ENCODE measurements at regions of chr20 and their contacts with region 1.

Region 1: GRCh38 chr20:63739130-63740069 is at the start of gene SLC2A4RG:
- DNase-seq: peak; percentile 71
- H3K4me3 ChIP-seq: peak within 1 kb of the TSS; percentile 72 to 75
- H3K27ac ChIP-seq: peak within 1 kb of the TSS; percentile 96
- H3K4me1 ChIP-seq: peaks cover 35% of the 10 kb centered on the region
- H3K27me3 ChIP-seq: no peaks in the 10 kb centered on the region
- CTCF ChIP-seq: peak in 1 of 4 experiments; percentile 7
- POLR2A ChIP-seq: peak; percentile 27
- total RNA-seq, gene SLC2A4RG: 140 to 155 TPM

Region 2: GRCh38 chr20:62321521-62321948 is 1417.9 kb before region 1 on chr20:
- intact Hi-C with region 1: no loop called
- DNase-seq: no peak
- H3K4me3 ChIP-seq: no peak overlapping the region
- H3K27ac ChIP-seq: no peak overlapping the region
- H3K4me1 ChIP-seq: no peaks in the 10 kb centered on the region
- H3K27me3 ChIP-seq: no peaks in the 10 kb centered on the region
- CTCF ChIP-seq: no peak
- POLR2A ChIP-seq: no peak

Region 3: GRCh38 chr20:63272584-63273579 is 466.5 kb before region 1 on chr20 and contains the start of gene ARFGAP1:
- intact Hi-C with region 1: no loop called
- DNase-seq: peak; percentile 88
- H3K4me3 ChIP-seq: peak within 1 kb of the TSS; percentile 90 to 100
- H3K27ac ChIP-seq: peak within 1 kb of the TSS; percentile 75 to 80
- H3K4me1 ChIP-seq: no peaks in the 10 kb centered on the region
- H3K27me3 ChIP-seq: no peaks in the 10 kb centered on the region
- CTCF ChIP-seq: no peak
- POLR2A ChIP-seq: peak; percentile 66
- total RNA-seq, gene ARFGAP1: 43.6 to 85.6 TPM

Region 4: DNA sequence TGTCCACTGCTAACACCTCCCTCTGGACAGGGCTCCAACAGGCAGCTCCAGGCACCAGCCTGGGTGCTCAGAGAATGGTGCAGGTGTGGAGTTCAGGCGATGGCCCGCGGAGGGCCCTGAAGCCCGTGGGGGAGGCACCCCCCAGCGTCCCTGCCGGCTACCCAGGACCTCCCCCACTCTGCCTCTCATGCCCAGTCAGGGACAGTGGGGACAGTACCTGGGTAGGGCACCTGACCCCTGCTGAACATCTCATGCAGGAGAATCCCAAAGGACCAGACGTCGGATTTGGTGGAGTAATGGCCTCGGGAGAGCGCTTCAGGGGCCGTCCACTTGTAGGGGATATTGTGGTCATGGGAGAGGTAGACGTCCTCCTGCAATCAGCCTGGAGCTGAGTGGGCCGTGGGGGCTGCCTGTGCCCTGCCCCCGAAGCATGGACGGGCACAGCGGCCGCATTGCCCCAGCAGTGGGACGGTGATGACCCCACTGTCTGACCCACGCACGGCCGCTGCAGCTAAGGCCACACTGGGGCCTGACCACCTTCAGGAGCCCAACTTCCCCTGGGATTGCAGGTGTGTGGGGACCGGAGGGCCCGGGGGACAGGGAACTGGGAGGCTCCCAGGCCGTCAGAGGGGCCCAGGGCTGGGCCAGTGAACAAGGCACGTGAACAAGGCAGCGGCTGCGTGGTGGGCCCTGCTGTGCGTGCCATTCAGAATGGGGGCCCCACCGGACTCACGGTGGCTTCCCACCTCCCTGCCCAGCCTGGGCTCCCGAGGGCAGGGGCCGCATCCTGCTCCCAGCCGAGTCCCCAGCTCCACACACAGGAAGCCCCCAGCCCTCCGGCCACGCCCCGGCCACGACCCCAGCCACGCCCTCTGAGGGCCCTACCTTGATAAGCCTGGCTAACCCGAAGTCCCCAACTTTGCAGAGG is 209.3 kb before region 1 on chr20:
- intact Hi-C with region 1: no loop called
- DNase-seq: no peak
- H3K4me3 ChIP-seq: no peak overlapping the region
- H3K27ac ChIP-seq: no peak overlapping the region
- H3K4me1 ChIP-seq: no peaks in the 10 kb centered on the region
- H3K27me3 ChIP-seq: no peaks in the 10 kb centered on the region
- CTCF ChIP-seq: no peak
- POLR2A ChIP-seq: no peak

Region 5: GRCh38 chr20:63627129-63627750 is 112.2 kb before region 1 on chr20:
- intact Hi-C with region 1: loop called (anchors 2 kb)
- DNase-seq: peak; percentile 93
- H3K4me3 ChIP-seq: peak overlapping the region; percentile 95 to 98
- H3K27ac ChIP-seq: peak overlapping the region; percentile 94 to 97
- H3K4me1 ChIP-seq: no peaks in the 10 kb centered on the region
- H3K27me3 ChIP-seq: no peaks in the 10 kb centered on the region
- CTCF ChIP-seq: peak in 2 of 4 experiments; percentile 8 to 18
- POLR2A ChIP-seq: peak; percentile 78

Region 6: GRCh38 chr20:63657937-63658748 is 81.3 kb before region 1 on chr20 and contains the start of gene RTEL1:
- intact Hi-C with region 1: loop called (anchors 5 kb)
- DNase-seq: peak; percentile 88
- H3K4me3 ChIP-seq: peak within 1 kb of the TSS; percentile 69 to 79
- H3K27ac ChIP-seq: peak within 1 kb of the TSS; percentile 86 to 87
- H3K4me1 ChIP-seq: peaks cover 9% of the 10 kb centered on the region
- H3K27me3 ChIP-seq: no peaks in the 10 kb centered on the region
- CTCF ChIP-seq: peak in 2 of 4 experiments; percentile 20 to 36
- POLR2A ChIP-seq: no peak
- total RNA-seq, gene RTEL1: 21.8 to 42.6 TPM

Region 7: GRCh38 chr20:63707549-63708300 is 31.7 kb before region 1 on chr20 and contains the starts of genes ARFRP1 and ZGPAT:
- intact Hi-C with region 1: loop called (anchors 2 kb)
- DNase-seq: peak; percentile 73
- H3K4me3 ChIP-seq: peak within 1 kb of the TSS; percentile 84 to 91
- H3K27ac ChIP-seq: peak within 1 kb of the TSS; percentile 70 to 73
- H3K4me1 ChIP-seq: peaks cover 17% of the 10 kb centered on the region
- H3K27me3 ChIP-seq: no peaks in the 10 kb centered on the region
- CTCF ChIP-seq: peak in 1 of 4 experiments; percentile 24
- POLR2A ChIP-seq: peak; percentile 56
- total RNA-seq, gene ARFRP1: 36.8 to 50.8 TPM
- total RNA-seq, gene ZGPAT: 29.3 to 55.5 TPM

Region 8: GRCh38 chr20:63835021-63835858 is 95.8 kb after region 1 on chr20:
- intact Hi-C with region 1: no loop called
- DNase-seq: peak; percentile 86
- H3K4me3 ChIP-seq: no peak overlapping the region
- H3K27ac ChIP-seq: peak overlapping the region; percentile 8 to 36
- H3K4me1 ChIP-seq: no peaks in the 10 kb centered on the region
- H3K27me3 ChIP-seq: no peaks in the 10 kb centered on the region
- CTCF ChIP-seq: no peak
- POLR2A ChIP-seq: no peak

Measured in prostate gland (tissue), 2 donors.